ENCODE measurements at regions of chr19 and their contacts with region 1.

Region 1: GRCh38 chr19:17390665-17391370 is 3.2 kb downstream of the CCDC194 start:
- DNase-seq: peak; percentile 83 to 94
- ATAC-seq: peak; percentile 99 to 100 (median 99)
- H3K4me3 ChIP-seq: peak overlapping the region; percentile 57
- H3K4me3 Mint-ChIP-seq: peak overlapping the region; percentile 89
- H3K27ac ChIP-seq: no peak overlapping the region
- H3K27ac Mint-ChIP-seq: peak overlapping the region in 1 of 2 donors; percentile 88
- H3K4me1 ChIP-seq: peaks cover 31% of the 10 kb centered on the region
- H3K4me1 Mint-ChIP-seq: peaks cover 5 to 24% of the 10 kb centered on the region in 2 donors
- H3K27me3 ChIP-seq: no peaks in the 10 kb centered on the region
- H3K27me3 Mint-ChIP-seq: peaks cover 0 to 3% of the 10 kb centered on the region in 2 donors
- CTCF ChIP-seq: peak; percentile 68

Region 2: DNA sequence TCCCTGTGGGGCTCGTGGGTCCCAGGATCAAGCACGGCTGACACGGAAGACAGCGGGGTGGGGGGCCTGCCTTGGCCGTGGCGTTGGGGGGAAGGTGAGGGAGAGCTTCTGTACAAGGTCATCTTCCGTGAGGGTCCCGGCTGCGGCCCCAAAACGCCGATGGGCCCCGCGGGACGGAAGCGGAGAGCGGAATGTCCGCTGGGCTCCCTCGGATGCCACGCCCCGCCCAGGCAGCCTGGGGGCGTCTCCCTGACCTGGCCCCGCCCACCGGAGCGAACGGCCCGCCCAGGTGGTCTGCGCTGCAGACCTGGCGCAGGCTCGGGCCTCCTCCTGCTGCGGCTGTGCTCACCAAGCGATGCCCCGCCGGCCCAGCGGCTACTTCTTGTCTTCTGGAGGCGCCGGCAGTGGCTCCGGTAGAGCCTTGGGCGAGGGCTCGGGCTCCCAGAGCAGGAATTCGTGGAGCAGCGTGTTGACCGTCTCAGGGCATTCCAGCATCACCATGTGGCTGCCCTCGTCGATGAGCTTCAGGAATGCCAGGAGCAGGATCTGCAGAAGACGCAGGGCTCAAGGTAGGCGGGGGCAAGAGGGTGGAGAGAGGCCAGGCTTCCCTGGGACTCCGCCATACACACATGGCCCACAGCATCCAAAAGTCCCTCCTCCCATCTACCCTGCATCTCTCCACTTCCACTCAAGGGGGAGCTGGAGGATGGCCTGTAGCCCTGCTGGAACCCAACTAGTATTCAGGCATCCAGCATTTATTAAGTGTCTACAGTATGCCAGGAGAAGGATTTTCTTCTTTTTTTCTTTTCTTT is 98.3 kb before region 1 on chr19:
- intact Hi-C with region 1: loop called (anchors 2 kb)
- DNase-seq: peak; percentile 78 to 90
- ATAC-seq: peak; percentile 91 to 96 (median 93)
- H3K4me3 ChIP-seq: peak overlapping the region; percentile 48
- H3K4me3 Mint-ChIP-seq: peak overlapping the region; percentile 86
- H3K27ac ChIP-seq: no peak overlapping the region
- H3K27ac Mint-ChIP-seq: peak overlapping the region in 1 of 2 donors; percentile 67
- H3K4me1 ChIP-seq: peaks cover 11% of the 10 kb centered on the region
- H3K4me1 Mint-ChIP-seq: peaks cover 0 to 10% of the 10 kb centered on the region in 2 donors
- H3K27me3 ChIP-seq: no peaks in the 10 kb centered on the region
- H3K27me3 Mint-ChIP-seq: no peaks in the 10 kb centered on the region
- CTCF ChIP-seq: peak; percentile 65

Region 3: GRCh38 chr19:17346109-17346671 is 44.6 kb before region 1 on chr19:
- intact Hi-C with region 1: loop called (anchors 1 kb)
- DNase-seq: peak; percentile 75 to 87
- ATAC-seq: peak; percentile 87 to 99 (median 99)
- H3K4me3 ChIP-seq: no peak overlapping the region
- H3K4me3 Mint-ChIP-seq: no peak overlapping the region
- H3K27ac ChIP-seq: no peak overlapping the region
- H3K27ac Mint-ChIP-seq: no peak overlapping the region
- H3K4me1 ChIP-seq: peaks cover 6% of the 10 kb centered on the region
- H3K4me1 Mint-ChIP-seq: peaks cover 0 to 6% of the 10 kb centered on the region in 2 donors
- H3K27me3 ChIP-seq: peaks cover 2% of the 10 kb centered on the region
- H3K27me3 Mint-ChIP-seq: peaks cover 7 to 16% of the 10 kb centered on the region in 2 donors
- CTCF ChIP-seq: peak; percentile 98

Region 4: GRCh38 chr19:17429641-17430113 is 38.9 kb after region 1 on chr19:
- intact Hi-C with region 1: no loop called
- DNase-seq: no peak
- ATAC-seq: no peak
- H3K4me3 ChIP-seq: no peak overlapping the region
- H3K4me3 Mint-ChIP-seq: no peak overlapping the region
- H3K27ac ChIP-seq: no peak overlapping the region
- H3K27ac Mint-ChIP-seq: no peak overlapping the region
- H3K4me1 ChIP-seq: peaks cover 3% of the 10 kb centered on the region
- H3K4me1 Mint-ChIP-seq: peaks cover 0 to 6% of the 10 kb centered on the region in 2 donors
- H3K27me3 ChIP-seq: no peaks in the 10 kb centered on the region
- H3K27me3 Mint-ChIP-seq: no peaks in the 10 kb centered on the region
- CTCF ChIP-seq: no peak